H1 (cell line): ENCODE measurements at regions of chr14 and their contacts with region 1.

Region 1: GRCh38 chr14:104078031-104078455 is 7.5 kb upstream of the ASPG start:
- DNase-seq: peak; percentile 90 to 94
- H3K4me3 ChIP-seq: no peak overlapping the region
- H3K27ac ChIP-seq: no peak overlapping the region
- H3K4me1 ChIP-seq: no peaks in the 10 kb centered on the region
- H3K27me3 ChIP-seq: no peaks in the 10 kb centered on the region
- CTCF ChIP-seq: peak; percentile 99 to 100 (median 100)
- EP300 ChIP-seq: peak in 1 of 2 experiments; percentile 28; a peak in 1 of 3 replicates
- POLR2A ChIP-seq: no peak
- RAD21 ChIP-seq: peak; percentile 94 to 97

Region 2: GRCh38 chr14:103974575-103974974 is 103.5 kb before region 1 on chr14:
- CTCF ChIA-PET with region 1: no interaction called
- POLR2A ChIA-PET with region 1: no interaction called
- DNase-seq: no peak
- H3K4me3 ChIP-seq: no peak overlapping the region
- H3K27ac ChIP-seq: no peak overlapping the region
- H3K4me1 ChIP-seq: no peaks in the 10 kb centered on the region
- H3K27me3 ChIP-seq: no peaks in the 10 kb centered on the region
- CTCF ChIP-seq: no peak
- EP300 ChIP-seq: no peak
- POLR2A ChIP-seq: no peak
- RAD21 ChIP-seq: no peak

Region 3: DNA sequence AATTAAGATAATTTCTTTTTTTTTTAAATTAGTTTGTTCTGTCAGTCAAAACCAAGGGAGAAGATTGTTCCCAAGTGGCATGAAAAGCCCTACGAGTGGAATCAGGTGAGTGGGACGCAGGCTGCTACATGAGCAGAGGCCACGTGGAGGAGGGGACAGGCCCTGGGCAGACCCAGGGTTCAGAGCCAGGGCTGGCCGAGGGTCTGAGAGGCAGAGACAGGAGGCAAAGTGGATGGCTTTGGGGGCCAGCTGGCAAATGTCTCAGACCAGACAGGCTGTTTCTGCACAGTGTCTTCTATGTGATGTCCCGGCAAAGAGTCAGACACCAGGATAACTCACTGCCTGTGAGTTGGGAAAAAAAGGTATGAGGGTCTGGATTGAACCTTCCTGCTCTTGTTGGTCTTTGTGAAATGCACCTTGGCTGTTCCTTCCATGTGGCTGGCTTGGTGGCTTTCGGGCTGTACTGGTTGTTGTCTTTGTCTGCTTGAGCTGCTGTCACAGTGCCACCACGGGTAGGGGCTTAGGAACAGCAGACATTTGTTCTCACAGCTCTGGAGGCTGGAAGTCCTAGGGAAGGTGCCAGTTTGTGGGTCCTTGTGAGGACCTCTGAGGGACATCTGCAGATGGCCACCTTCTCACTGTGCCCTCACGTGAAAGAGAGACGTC is 28.3 kb before region 1 on chr14:
- CTCF ChIA-PET with region 1: interaction called, 11 read pairs
- POLR2A ChIA-PET with region 1: no interaction called
- DNase-seq: no peak
- H3K4me3 ChIP-seq: no peak overlapping the region
- H3K27ac ChIP-seq: no peak overlapping the region
- H3K4me1 ChIP-seq: no peaks in the 10 kb centered on the region
- H3K27me3 ChIP-seq: no peaks in the 10 kb centered on the region
- CTCF ChIP-seq: no peak
- EP300 ChIP-seq: no peak
- POLR2A ChIP-seq: no peak
- RAD21 ChIP-seq: no peak

Region 4: GRCh38 chr14:104064003-104064402 is 14.0 kb before region 1 on chr14:
- CTCF ChIA-PET with region 1: interaction called, 23 read pairs
- POLR2A ChIA-PET with region 1: no interaction called
- DNase-seq: no peak
- H3K4me3 ChIP-seq: no peak overlapping the region
- H3K27ac ChIP-seq: no peak overlapping the region
- H3K4me1 ChIP-seq: no peaks in the 10 kb centered on the region
- H3K27me3 ChIP-seq: no peaks in the 10 kb centered on the region
- CTCF ChIP-seq: no peak
- EP300 ChIP-seq: no peak
- POLR2A ChIP-seq: no peak
- RAD21 ChIP-seq: no peak

Region 5: GRCh38 chr14:104094709-104095438 is 16.8 kb after region 1 on chr14:
- CTCF ChIA-PET with region 1: interaction called, 43 read pairs
- POLR2A ChIA-PET with region 1: no interaction called
- DNase-seq: peak; percentile 58 to 99
- H3K4me3 ChIP-seq: no peak overlapping the region
- H3K27ac ChIP-seq: no peak overlapping the region
- H3K4me1 ChIP-seq: peaks cover 0 to 7% (median 4%) of the 10 kb centered on the region in 4 experiments; a peak in 3 of 7 replicates
- H3K27me3 ChIP-seq: no peaks in the 10 kb centered on the region; a peak in 3 of 7 replicates
- CTCF ChIP-seq: peak in 2 of 3 experiments; percentile 87 to 94; a peak in 3 of 4 replicates
- EP300 ChIP-seq: no peak
- POLR2A ChIP-seq: no peak
- RAD21 ChIP-seq: peak; percentile 76 to 79

Region 6: DNA sequence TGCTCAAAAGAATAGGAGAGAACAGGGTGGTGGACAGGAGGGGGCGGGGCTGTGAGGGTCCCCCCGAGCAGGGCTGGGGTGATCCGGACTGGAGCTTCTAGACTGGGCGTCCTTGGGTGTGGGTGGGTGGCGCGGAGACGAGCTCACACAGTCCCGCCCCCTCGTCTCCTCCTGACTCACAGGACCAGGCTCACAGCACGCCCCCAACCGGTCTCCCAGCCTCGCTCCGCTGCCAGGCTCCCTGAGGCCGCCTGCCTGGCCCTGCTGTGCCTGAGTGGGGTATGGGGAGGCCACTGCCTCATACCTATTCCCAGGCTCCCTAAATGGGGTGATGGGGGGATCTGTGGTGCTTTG is 30.1 kb after region 1 on chr14:
- CTCF ChIA-PET with region 1: interaction called, 15 read pairs
- POLR2A ChIA-PET with region 1: no interaction called
- DNase-seq: peak in 1 of 2 experiments; percentile 46
- H3K4me3 ChIP-seq: no peak overlapping the region
- H3K27ac ChIP-seq: no peak overlapping the region
- H3K4me1 ChIP-seq: peaks cover 0 to 14% (median 1%) of the 10 kb centered on the region in 4 experiments; a peak in 5 of 7 replicates
- H3K27me3 ChIP-seq: no peaks in the 10 kb centered on the region
- CTCF ChIP-seq: no peak
- EP300 ChIP-seq: no peak
- POLR2A ChIP-seq: no peak
- RAD21 ChIP-seq: no peak

Region 7: DNA sequence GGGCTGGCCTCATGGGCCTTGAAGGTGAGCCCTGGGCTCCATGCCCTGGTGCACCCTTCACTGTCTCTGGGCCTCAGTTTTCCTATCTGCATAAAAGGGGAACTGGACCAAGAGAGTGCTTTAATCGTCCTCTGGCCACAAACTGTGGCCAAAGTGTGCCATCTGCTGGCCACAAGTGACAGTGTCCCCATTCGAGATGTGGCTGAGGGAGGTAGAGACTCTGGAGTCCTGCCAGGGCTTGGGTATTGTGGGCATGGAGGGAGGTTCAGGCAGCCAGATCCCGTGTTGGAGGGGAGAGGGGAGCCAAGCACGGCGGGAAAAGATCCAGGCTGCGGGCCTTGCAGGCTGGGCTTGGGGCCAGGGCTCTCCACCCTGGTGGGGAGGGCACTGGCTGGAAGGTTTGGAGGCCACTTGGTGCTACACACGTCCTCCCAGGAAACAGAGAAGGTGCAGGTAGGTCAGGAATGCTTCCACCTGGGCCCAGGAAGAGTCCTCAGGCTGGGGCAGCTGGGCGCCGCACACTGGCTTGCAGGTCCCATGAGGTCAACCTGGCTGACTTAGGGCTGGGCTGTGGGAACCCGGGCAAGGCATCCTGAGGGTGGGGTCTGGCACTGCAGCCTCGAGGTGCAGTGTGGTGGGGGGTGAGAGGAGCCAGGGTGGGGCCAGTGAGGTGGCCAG is 53.1 kb after region 1 on chr14:
- CTCF ChIA-PET with region 1: interaction called, 62 read pairs
- POLR2A ChIA-PET with region 1: no interaction called
- DNase-seq: peak in 1 of 2 experiments; percentile 72
- H3K4me3 ChIP-seq: no peak overlapping the region
- H3K27ac ChIP-seq: no peak overlapping the region
- H3K4me1 ChIP-seq: peaks cover 0 to 12% (median 10%) of the 10 kb centered on the region in 4 experiments; a peak in 6 of 7 replicates
- H3K27me3 ChIP-seq: peaks cover 10 to 17% (median 11%) of the 10 kb centered on the region in 4 experiments; a peak in 6 of 7 replicates
- CTCF ChIP-seq: peak in 2 of 3 experiments; percentile 92 to 94; a peak in 3 of 4 replicates
- EP300 ChIP-seq: no peak
- POLR2A ChIP-seq: no peak
- RAD21 ChIP-seq: peak; percentile 92 to 95